Esophagus squamous epithelium (tissue), 5 donors: ENCODE measurements at regions of chr20 and their contacts with region 1.

Region 1: DNA sequence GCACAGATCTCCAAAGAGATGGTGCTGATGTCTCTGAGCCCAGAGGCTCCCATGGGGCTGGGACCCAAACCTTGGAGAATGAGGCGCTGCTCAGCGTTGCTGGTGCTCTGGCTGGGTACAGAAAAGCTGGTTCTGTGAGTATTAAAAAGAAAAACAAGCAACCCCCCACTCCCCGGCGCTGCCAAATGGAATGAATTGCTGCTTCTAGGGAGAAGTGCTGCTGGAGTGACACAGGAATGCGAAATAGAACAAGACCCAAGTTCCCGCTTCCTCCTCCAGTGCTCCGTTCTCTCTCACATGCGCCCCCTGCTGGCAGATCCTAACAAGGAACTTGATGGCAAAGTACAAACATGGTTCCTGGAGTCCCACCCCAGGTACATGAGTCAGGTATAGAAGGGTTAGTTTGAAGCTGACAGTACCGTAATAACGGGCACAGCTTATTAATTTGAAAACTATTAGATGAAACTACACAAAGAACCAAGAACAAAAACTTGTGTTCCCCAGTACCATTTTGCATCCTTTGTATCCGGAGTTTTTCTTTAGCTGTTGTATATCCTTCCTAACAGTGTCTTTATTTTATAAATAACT is 2.1 kb upstream of the DDX27 start:
- DNase-seq: peak; percentile 23
- H3K4me3 ChIP-seq: peak overlapping the region in 1 of 4 donors; percentile 21
- H3K27ac ChIP-seq: peak overlapping the region in 2 of 4 donors; percentile 35 to 48
- H3K4me1 ChIP-seq: peaks cover 10 to 31% (median 10%) of the 10 kb centered on the region in 3 donors
- H3K27me3 ChIP-seq: no peaks in the 10 kb centered on the region
- CTCF ChIP-seq: peak; percentile 86 to 95 (median 92)
- POLR2A ChIP-seq: no peak

Region 2: GRCh38 chr20:49132995-49133478 is 84.0 kb before region 1 on chr20:
- intact Hi-C with region 1: loop called (anchors 2 kb)
- DNase-seq: no peak
- H3K4me3 ChIP-seq: no peak overlapping the region
- H3K27ac ChIP-seq: peak overlapping the region in 2 of 4 donors; percentile 8 to 19
- H3K4me1 ChIP-seq: peaks cover 0 to 9% (median 0%) of the 10 kb centered on the region in 3 donors
- H3K27me3 ChIP-seq: no peaks in the 10 kb centered on the region
- CTCF ChIP-seq: peak; percentile 52 to 70 (median 54)
- POLR2A ChIP-seq: no peak